ENCODE measurements at regions of chr2 and their contacts with region 1.

Region 1: GRCh38 chr2:152635635-152636298 is 81.5 kb downstream of the PRPF40A start:
- DNase-seq: peak; percentile 20 to 75 (median 66)
- ATAC-seq: peak; percentile 54
- H3K4me3 ChIP-seq: no peak overlapping the region
- H3K4me3 Mint-ChIP-seq: no peak overlapping the region
- H3K27ac ChIP-seq: no peak overlapping the region
- H3K27ac Mint-ChIP-seq: no peak overlapping the region
- H3K4me1 ChIP-seq: no peaks in the 10 kb centered on the region
- H3K4me1 Mint-ChIP-seq: peaks cover 6% of the 10 kb centered on the region
- H3K27me3 ChIP-seq: no peaks in the 10 kb centered on the region
- H3K27me3 Mint-ChIP-seq: peaks cover 8% of the 10 kb centered on the region
- CTCF ChIP-seq: peak; percentile 78

Region 2: DNA sequence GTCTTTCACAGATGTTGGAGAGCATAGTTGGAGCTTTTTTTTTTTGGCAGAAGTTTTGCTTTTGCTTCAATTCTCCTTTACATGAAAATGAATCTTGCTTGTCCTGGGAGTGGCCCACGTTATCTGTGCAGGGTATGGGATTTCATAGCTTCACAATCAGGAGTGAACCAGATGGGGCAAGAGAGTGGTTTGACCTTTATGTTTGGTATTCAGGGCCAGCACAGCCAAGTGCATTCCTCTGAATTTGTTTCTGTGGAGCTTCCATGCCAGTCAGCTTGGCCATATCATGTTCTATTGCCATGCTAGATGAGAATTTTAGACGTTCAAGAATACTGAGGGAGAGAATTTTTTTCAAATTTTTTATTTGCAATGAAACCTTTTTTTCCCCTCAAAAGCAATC is 35.1 kb before region 1 on chr2:
- CTCF ChIA-PET with region 1: no interaction called
- POLR2A ChIA-PET with region 1: no interaction called
- intact Hi-C with region 1: no loop called
- DNase-seq: no peak
- ATAC-seq: no peak
- H3K4me3 ChIP-seq: no peak overlapping the region
- H3K4me3 Mint-ChIP-seq: no peak overlapping the region
- H3K27ac ChIP-seq: no peak overlapping the region
- H3K27ac Mint-ChIP-seq: no peak overlapping the region
- H3K4me1 ChIP-seq: no peaks in the 10 kb centered on the region
- H3K4me1 Mint-ChIP-seq: peaks cover 3% of the 10 kb centered on the region
- H3K27me3 ChIP-seq: no peaks in the 10 kb centered on the region
- H3K27me3 Mint-ChIP-seq: no peaks in the 10 kb centered on the region
- CTCF ChIP-seq: no peak

Region 3: GRCh38 chr2:152647552-152647951 is 11.8 kb after region 1 on chr2:
- CTCF ChIA-PET with region 1: interaction called, 11 read pairs
- POLR2A ChIA-PET with region 1: no interaction called
- intact Hi-C with region 1: no loop called
- DNase-seq: no peak
- ATAC-seq: no peak
- H3K4me3 ChIP-seq: no peak overlapping the region
- H3K4me3 Mint-ChIP-seq: no peak overlapping the region
- H3K27ac ChIP-seq: no peak overlapping the region
- H3K27ac Mint-ChIP-seq: peak overlapping the region; percentile 19
- H3K4me1 ChIP-seq: no peaks in the 10 kb centered on the region
- H3K4me1 Mint-ChIP-seq: no peaks in the 10 kb centered on the region
- H3K27me3 ChIP-seq: no peaks in the 10 kb centered on the region
- H3K27me3 Mint-ChIP-seq: no peaks in the 10 kb centered on the region
- CTCF ChIP-seq: no peak

Region 4: DNA sequence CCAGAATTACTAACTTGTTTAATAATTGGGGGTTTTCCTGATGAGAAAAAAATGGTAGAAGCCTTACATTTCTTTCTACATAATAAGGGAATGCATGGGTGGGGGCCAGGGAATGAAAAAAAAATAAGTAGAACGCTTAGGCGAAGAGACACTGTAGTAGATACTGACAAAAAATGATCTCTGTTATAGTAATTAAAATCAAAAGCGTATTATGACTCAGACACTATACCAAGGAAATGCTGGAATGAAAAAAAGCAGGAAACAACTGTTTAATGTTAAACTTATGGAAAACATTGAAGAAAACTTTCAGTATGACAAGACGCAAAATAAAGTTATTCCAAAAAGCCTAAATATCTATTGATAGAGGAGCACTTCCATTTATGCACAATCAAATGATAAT is 38.6 kb after region 1 on chr2:
- CTCF ChIA-PET with region 1: no interaction called
- POLR2A ChIA-PET with region 1: no interaction called
- intact Hi-C with region 1: no loop called
- DNase-seq: no peak
- ATAC-seq: no peak
- H3K4me3 ChIP-seq: no peak overlapping the region
- H3K4me3 Mint-ChIP-seq: no peak overlapping the region
- H3K27ac ChIP-seq: no peak overlapping the region
- H3K27ac Mint-ChIP-seq: no peak overlapping the region
- H3K4me1 ChIP-seq: no peaks in the 10 kb centered on the region
- H3K4me1 Mint-ChIP-seq: no peaks in the 10 kb centered on the region
- H3K27me3 ChIP-seq: no peaks in the 10 kb centered on the region
- H3K27me3 Mint-ChIP-seq: no peaks in the 10 kb centered on the region
- CTCF ChIP-seq: no peak

Measured in CD8-positive, alpha-beta T cell (primary cell).